Naive thymus-derived CD8-positive, alpha-beta T cell (primary cell): ENCODE measurements at regions of chr10 and their contacts with region 1.

Region 1: DNA sequence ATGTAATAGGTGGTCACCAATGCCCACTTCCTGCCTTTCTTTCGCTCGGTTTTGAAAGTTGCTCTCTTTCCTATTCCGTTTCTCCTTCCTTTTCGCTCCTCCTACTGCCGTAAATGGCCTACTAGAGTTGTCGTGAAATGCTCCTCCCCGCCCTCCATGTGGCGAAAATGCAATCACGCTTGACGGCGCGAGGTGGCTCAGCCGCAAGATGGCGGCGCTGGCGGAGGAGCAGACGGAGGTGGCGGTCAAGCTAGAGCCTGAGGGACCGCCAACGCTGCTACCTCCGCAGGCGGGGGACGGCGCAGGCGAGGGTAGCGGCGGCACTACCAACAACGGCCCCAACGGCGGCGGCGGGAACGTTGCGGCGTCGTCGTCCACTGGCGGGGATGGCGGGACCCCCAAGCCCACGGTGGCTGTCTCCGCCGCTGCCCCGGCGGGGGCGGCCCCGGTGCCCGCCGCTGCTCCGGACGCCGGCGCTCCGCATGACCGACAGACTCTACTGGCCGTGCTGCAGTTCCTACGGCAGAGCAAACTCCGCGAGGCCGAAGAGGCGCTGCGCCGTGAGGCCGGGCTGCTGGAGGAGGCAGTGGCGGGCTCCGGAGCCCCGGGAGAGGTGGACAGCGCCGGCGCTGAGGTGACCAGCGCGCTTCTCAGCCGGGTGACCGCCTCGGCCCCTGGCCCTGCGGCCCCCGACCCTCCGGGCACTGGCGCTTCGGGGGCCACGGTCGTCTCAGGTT is at the start of gene TAF5:
- DNase-seq: peak; percentile 77 to 94 (median 89)
- ATAC-seq: peak; percentile 62 to 63
- H3K4me3 Mint-ChIP-seq: peak within 1 kb of the TSS; percentile 85 to 98 (median 92)
- H3K27ac Mint-ChIP-seq: peak within 1 kb of the TSS; percentile 82 to 96 (median 94)
- H3K4me1 Mint-ChIP-seq: peaks cover 3 to 29% (median 12%) of the 10 kb centered on the region in 4 donors
- H3K27me3 Mint-ChIP-seq: no peaks in the 10 kb centered on the region
- polyA plus RNA-seq, gene TAF5: 1.3 to 3.7 (median 2.6) TPM

Region 2: GRCh38 chr10:103350501-103351260 is 17.3 kb before region 1 on chr10 and contains the start of gene PCGF6:
- POLR2A ChIA-PET with region 1: interaction called, 10 read pairs
- DNase-seq: peak; percentile 41 to 83 (median 67)
- ATAC-seq: peak; percentile 86 to 89
- H3K4me3 Mint-ChIP-seq: peak within 1 kb of the TSS; percentile 81 to 96 (median 90)
- H3K27ac Mint-ChIP-seq: peak within 1 kb of the TSS; percentile 37 to 94 (median 88)
- H3K4me1 Mint-ChIP-seq: peaks cover 3 to 14% (median 9%) of the 10 kb centered on the region in 4 donors
- H3K27me3 Mint-ChIP-seq: peaks cover 0 to 1% (median 0%) of the 10 kb centered on the region in 5 donors
- polyA plus RNA-seq, gene PCGF6: 4.4 to 7.2 (median 5.3) TPM

Region 3: GRCh38 chr10:103396064-103396788 is 28.3 kb after region 1 on chr10 and contains the starts of genes ATP5MK and PDCD11:
- POLR2A ChIA-PET with region 1: interaction called, 16 read pairs
- DNase-seq: peak; percentile 83 to 97 (median 92)
- ATAC-seq: peak; percentile 98 to 99
- H3K4me3 Mint-ChIP-seq: peak within 1 kb of the TSS; percentile 88 to 99 (median 98)
- H3K27ac Mint-ChIP-seq: peak within 1 kb of the TSS; percentile 92 to 99 (median 94)
- H3K4me1 Mint-ChIP-seq: peaks cover 27 to 60% (median 50%) of the 10 kb centered on the region in 4 donors
- H3K27me3 Mint-ChIP-seq: no peaks in the 10 kb centered on the region
- polyA plus RNA-seq, gene ATP5MK: 385 to 601 (median 461) TPM
- polyA plus RNA-seq, gene PDCD11: 8.6 to 14.9 (median 9.9) TPM

Region 4: GRCh38 chr10:103699611-103700435 is 331.9 kb after region 1 on chr10:
- POLR2A ChIA-PET with region 1: no interaction called
- DNase-seq: no peak
- ATAC-seq: no peak
- H3K4me3 Mint-ChIP-seq: no peak overlapping the region
- H3K27ac Mint-ChIP-seq: peak overlapping the region in 1 of 10 donors; percentile 75
- H3K4me1 Mint-ChIP-seq: peaks cover 2 to 14% (median 6%) of the 10 kb centered on the region in 4 donors
- H3K27me3 Mint-ChIP-seq: peaks cover 0 to 24% (median 4%) of the 10 kb centered on the region in 5 donors